Caco-2 (cell line): ENCODE measurements at regions of chr1 and their contacts with region 1.

Region 1: DNA sequence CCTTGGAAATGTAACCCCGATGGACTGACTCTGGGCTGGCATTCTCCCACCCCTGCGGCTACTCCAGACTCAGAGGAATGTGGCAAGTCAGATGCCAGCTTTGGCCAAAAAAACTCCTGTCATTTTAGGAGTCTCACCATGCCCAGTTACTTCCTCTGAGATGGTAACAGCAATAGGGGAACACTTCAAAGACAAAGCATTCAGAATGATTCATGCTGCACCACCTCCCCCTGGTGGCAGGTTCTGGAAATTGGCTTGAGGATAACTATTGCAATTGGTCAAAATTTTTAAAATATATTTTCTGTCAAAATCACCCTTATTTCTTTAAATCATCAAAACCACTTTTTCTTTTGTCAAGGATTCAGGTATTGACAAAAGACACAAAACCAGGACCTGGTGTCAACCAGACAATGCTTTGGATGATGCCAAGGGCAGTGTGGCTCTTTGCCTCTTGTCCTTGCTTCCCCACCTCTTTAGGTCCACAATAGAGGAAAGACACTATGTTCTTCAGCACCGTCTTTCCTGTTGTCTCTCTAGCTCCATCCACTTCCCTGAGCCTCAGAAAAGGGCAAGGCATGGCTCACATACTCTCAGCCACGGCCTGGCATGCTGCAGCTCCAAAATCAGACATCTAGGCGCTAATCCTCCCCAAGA is 9.9 kb upstream of the CDCA8 start:
- DNase-seq: peak in 1 of 2 experiments; percentile 69
- H3K4me3 ChIP-seq: no peak overlapping the region
- H3K4me3 Mint-ChIP-seq: no peak overlapping the region
- H3K27ac Mint-ChIP-seq: no peak overlapping the region
- H3K4me1 ChIP-seq: no peaks in the 10 kb centered on the region
- H3K4me1 Mint-ChIP-seq: no peaks in the 10 kb centered on the region
- H3K27me3 ChIP-seq: no peaks in the 10 kb centered on the region
- H3K27me3 Mint-ChIP-seq: no peaks in the 10 kb centered on the region
- CTCF ChIP-seq: peak; percentile 65 to 71

Region 2: DNA sequence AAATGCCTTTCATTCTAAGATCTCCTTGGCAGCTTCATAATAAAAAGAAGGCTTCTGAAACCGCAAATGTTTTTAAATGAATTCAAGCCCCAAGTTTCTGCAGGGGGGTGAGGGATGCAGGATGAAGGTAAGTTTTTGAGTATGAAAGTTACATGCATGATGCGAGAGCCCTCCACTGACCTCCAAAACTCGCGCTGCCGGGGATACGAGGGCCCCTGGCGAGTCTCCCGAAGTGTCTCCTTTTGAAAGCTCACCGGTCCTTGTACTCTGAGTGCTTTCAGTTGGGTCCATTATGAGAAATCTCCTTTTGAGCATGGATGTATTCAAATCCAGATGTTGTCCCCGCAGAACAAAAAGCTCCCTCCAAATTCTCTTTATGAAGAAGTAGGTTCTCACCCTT is 226.9 kb before region 1 on chr1:
- CTCF ChIA-PET with region 1: interaction called, 6 read pairs
- POLR2A ChIA-PET with region 1: no interaction called
- intact Hi-C with region 1: loop called (anchors 1 kb)
- DNase-seq: no peak
- H3K4me3 ChIP-seq: no peak overlapping the region
- H3K4me3 Mint-ChIP-seq: no peak overlapping the region
- H3K27ac Mint-ChIP-seq: no peak overlapping the region
- H3K4me1 ChIP-seq: no peaks in the 10 kb centered on the region
- H3K4me1 Mint-ChIP-seq: no peaks in the 10 kb centered on the region
- H3K27me3 ChIP-seq: no peaks in the 10 kb centered on the region
- H3K27me3 Mint-ChIP-seq: peaks cover 3% of the 10 kb centered on the region
- CTCF ChIP-seq: no peak

Region 3: GRCh38 chr1:37602750-37603694 is 79.4 kb before region 1 on chr1:
- CTCF ChIA-PET with region 1: interaction called, 9 read pairs
- POLR2A ChIA-PET with region 1: no interaction called
- intact Hi-C with region 1: loop called (anchors 1 kb)
- DNase-seq: peak; percentile 46 to 50
- H3K4me3 ChIP-seq: no peak overlapping the region
- H3K4me3 Mint-ChIP-seq: no peak overlapping the region
- H3K27ac Mint-ChIP-seq: no peak overlapping the region
- H3K4me1 ChIP-seq: no peaks in the 10 kb centered on the region
- H3K4me1 Mint-ChIP-seq: peaks cover 6% of the 10 kb centered on the region
- H3K27me3 ChIP-seq: no peaks in the 10 kb centered on the region
- H3K27me3 Mint-ChIP-seq: no peaks in the 10 kb centered on the region
- CTCF ChIP-seq: peak; percentile 52 to 74

Region 4: DNA sequence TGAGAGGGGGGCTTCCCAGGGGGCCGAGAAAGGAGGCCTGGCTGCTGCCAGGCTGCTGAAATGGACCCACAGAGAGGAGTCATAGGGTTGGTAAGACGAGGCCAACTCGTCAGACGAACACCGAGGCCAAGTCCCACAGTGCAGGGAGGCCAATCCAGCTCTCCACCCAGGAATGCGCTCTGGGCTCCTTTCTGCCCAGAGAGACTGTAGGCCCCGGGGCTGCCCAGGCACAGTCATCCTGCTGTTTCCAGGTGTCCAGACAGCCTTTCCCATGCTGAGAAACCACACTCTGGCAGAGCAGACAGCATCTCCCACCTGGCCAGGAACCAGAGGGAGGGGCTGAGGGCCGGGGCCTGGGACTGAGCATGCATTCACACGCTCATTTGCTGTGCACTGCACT is 21.1 kb before region 1 on chr1:
- CTCF ChIA-PET with region 1: no interaction called
- POLR2A ChIA-PET with region 1: no interaction called
- intact Hi-C with region 1: no loop called
- DNase-seq: no peak
- H3K4me3 ChIP-seq: no peak overlapping the region
- H3K4me3 Mint-ChIP-seq: no peak overlapping the region
- H3K27ac Mint-ChIP-seq: no peak overlapping the region
- H3K4me1 ChIP-seq: peaks cover 6% of the 10 kb centered on the region
- H3K4me1 Mint-ChIP-seq: no peaks in the 10 kb centered on the region
- H3K27me3 ChIP-seq: no peaks in the 10 kb centered on the region
- H3K27me3 Mint-ChIP-seq: no peaks in the 10 kb centered on the region
- CTCF ChIP-seq: no peak

Region 5: DNA sequence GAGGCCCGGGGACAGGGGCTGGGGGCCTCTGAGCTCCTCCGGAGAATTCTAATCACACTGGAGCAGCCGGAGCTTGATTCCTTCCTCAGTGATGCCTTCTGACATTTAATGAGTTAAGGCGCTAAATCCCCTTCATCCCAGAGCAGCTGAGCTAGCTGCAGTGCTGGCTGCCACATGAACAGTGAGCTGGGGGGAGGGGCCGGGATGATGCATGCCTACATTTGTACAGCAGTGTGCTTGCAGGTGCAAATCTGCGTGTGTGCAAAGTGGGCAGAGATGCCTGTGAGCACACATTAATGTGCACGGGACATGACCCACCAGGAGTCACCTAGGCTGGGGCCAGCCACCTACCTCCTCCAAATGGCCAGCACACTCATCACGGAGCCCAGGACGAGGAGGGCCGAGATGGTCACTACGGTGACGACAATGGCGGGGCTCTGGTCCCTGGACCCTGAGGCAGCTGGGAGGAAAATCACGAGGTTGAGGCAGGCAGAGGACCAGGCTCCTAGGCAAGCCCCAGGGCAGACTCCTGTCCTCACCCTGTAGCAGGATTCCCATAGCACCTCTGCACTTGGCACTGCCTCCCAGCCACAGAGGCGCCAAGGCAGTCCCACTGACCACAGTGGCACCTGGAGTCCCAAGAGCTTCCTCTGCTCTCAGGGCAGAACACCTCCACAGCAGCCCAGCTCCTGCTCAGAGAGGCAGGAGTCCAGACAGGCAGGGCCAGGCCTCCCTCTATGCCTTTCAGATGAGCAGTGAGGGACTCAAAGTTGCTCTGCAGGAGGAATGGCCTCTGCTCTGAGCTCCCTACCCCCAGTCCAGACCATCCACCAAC is 44.5 kb after region 1 on chr1:
- CTCF ChIA-PET with region 1: no interaction called
- POLR2A ChIA-PET with region 1: no interaction called
- intact Hi-C with region 1: no loop called
- DNase-seq: no peak
- H3K4me3 ChIP-seq: no peak overlapping the region
- H3K4me3 Mint-ChIP-seq: no peak overlapping the region
- H3K27ac Mint-ChIP-seq: no peak overlapping the region
- H3K4me1 ChIP-seq: peaks cover 5% of the 10 kb centered on the region
- H3K4me1 Mint-ChIP-seq: peaks cover 8% of the 10 kb centered on the region
- H3K27me3 ChIP-seq: no peaks in the 10 kb centered on the region
- H3K27me3 Mint-ChIP-seq: no peaks in the 10 kb centered on the region
- CTCF ChIP-seq: no peak